ENCODE measurements at regions of chr5 and their contacts with region 1.

Region 1: DNA sequence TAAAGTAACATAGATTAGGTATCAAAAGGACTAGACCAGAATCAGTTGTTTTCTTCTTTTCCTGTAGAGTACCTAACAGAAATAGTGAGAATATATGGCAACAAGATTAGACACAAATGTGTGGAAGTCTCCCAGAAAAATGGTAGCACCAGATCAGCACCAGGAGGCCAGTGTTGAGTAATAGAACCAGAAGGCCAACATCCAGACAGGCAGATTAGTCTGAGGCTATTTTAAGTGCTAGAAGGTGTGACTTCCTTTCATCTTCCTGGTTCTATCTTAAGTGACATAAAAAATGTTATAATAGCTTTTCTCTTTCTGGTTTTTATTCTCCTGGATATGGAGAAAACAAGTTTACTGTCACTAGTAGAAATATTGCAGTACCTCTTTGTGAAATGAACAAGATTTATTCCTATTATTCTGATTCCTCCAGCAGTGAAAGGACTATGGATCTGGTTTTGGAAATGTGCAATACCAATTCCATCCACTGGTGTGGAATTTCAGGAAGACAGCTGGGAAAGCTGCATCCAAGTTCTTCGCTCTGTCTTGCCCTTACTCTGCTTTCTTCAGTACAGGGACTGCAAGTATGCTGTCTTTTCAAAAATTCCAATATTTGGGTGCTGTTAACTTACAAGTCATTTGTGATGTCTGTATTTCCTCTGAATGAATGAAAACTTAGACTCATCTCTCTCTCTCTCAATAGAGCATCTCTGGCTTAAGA is 39.1 kb downstream of the SHLD3 start:
- DNase-seq: peak; percentile 18
- ATAC-seq: peak; percentile 71; the same call in 1 of the 2 replicates
- H3K4me3 ChIP-seq: no peak overlapping the region
- H3K27ac ChIP-seq: no peak overlapping the region
- H3K4me1 ChIP-seq: no peaks in the 10 kb centered on the region
- H3K27me3 ChIP-seq: no peaks in the 10 kb centered on the region
- CTCF ChIP-seq: peak; percentile 55; the same call in 1 of the 2 replicates

Region 2: GRCh38 chr5:65721720-65722574 is 58.0 kb after region 1 on chr5 and contains the starts of genes NLN and SGTB:
- CTCF ChIA-PET with region 1: no interaction called
- POLR2A ChIA-PET with region 1: interaction called, 12 read pairs
- in situ Hi-C with region 1: no loop called
- intact Hi-C with region 1: no loop called
- DNase-seq: no peak
- ATAC-seq: peak; percentile 97
- H3K4me3 ChIP-seq: peak within 1 kb of the TSS; percentile 93 to 97
- H3K27ac ChIP-seq: peak within 1 kb of the TSS; percentile 82
- H3K4me1 ChIP-seq: peaks cover 16% of the 10 kb centered on the region
- H3K27me3 ChIP-seq: no peaks in the 10 kb centered on the region
- CTCF ChIP-seq: no peak
- total RNA-seq, gene NLN: 51.8 TPM
- total RNA-seq, gene SGTB: 9.2 TPM

Measured in Panc1 (cell line).